ENCODE measurements at regions of chr4 and their contacts with region 1.

Region 1: DNA sequence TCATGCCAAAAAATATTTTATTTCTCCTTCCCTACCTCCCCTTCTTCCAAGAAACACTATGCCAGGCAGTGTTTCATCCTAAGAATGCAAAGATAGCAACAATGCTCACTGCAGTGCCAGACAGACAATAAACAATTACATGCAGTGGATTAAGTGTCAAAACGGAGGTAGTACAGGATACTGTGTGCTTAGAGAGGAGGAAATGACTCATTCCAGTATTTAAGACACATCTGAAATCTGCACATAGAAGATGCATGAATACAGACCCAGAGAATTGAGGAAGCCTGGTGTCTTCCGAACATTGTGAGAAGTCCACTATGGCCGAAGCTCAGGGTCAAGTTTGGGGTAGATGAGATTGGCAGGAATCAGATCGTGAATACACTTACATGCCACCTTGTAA is 326.4 kb downstream of the PPP3CA start:
- DNase-seq: no peak
- H3K4me3 Mint-ChIP-seq: peak overlapping the region; percentile 38
- H3K27ac Mint-ChIP-seq: peak overlapping the region; percentile 76
- H3K4me1 Mint-ChIP-seq: peaks cover 40% of the 10 kb centered on the region
- H3K27me3 Mint-ChIP-seq: no peaks in the 10 kb centered on the region
- CTCF ChIP-seq: no peak

Region 2: DNA sequence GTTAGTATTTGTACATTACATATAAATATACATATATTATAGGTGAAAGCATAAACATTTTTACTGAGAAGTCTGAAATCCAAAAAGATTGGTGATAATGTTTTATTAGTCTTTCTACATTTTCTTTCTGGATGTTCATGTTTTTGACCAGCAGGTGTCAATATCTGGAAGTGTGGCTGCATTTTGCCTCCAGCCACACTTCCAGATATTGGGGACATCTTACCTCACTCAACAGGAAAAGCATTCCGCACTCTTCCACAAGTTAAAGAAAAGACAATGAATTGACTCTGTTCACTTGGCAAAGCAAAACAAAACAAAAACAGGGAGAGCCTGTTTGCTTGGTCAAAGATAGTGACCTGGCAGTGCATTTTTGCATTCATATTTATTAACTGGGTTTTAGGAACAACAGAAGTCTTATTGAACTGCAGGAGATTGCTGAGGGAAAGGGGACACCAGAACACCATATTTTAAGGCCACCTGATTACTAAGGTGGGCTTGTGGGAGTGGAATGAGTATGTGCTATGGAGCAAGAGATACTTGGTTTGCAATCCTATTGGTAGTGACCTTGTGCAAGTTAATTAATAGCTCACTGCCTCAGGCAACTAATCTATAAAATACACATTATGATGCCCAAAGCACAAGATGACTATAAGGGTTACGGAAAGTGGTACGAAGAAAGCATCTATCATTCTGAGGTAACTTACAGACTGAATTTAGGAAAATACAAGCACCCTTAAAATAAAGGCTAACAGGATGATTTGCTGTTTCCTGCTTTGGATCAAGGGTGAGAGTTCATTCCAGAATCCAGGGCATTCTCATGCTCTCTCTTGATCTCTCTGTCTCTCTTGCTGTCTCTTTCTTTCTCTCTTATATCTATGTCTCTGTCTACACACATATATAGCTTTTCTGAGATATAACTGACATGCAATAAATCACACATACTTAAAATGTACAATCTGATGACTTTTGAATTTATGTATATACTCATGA is 113.2 kb before region 1 on chr4:
- CTCF ChIA-PET with region 1: no interaction called
- intact Hi-C with region 1: loop called (anchors 5 kb)
- DNase-seq: peak; percentile 17
- H3K4me3 Mint-ChIP-seq: no peak overlapping the region
- H3K27ac Mint-ChIP-seq: peak overlapping the region; percentile 79
- H3K4me1 Mint-ChIP-seq: peaks cover 11% of the 10 kb centered on the region
- H3K27me3 Mint-ChIP-seq: no peaks in the 10 kb centered on the region
- CTCF ChIP-seq: no peak